Lower leg skin (tissue), 4 donors: ENCODE measurements at regions of chr4 and their contacts with region 1.

Region 1: DNA sequence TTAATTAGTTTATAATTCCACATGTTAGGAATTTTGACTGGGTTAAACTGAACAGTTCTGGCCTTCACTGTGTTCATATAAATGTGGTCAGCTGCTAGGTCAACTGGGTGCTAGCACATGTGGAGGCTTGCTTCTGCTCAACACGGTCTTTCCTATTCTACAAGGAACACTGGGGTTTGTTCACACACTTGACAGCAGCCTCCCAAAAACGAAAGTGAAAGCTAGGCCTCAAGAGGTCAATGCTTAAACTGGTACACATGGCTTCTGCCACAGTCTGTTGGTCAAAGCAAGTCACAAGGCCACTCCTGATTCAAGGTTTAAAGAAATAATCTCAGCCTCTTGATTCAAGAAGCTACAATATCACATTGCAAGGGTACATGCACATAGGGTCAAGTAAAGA is 126.5 kb downstream of the QDPR start:
- DNase-seq: no peak
- H3K4me3 ChIP-seq: no peak overlapping the region
- CTCF ChIP-seq: no peak
- POLR2A ChIP-seq: no peak

Region 2: DNA sequence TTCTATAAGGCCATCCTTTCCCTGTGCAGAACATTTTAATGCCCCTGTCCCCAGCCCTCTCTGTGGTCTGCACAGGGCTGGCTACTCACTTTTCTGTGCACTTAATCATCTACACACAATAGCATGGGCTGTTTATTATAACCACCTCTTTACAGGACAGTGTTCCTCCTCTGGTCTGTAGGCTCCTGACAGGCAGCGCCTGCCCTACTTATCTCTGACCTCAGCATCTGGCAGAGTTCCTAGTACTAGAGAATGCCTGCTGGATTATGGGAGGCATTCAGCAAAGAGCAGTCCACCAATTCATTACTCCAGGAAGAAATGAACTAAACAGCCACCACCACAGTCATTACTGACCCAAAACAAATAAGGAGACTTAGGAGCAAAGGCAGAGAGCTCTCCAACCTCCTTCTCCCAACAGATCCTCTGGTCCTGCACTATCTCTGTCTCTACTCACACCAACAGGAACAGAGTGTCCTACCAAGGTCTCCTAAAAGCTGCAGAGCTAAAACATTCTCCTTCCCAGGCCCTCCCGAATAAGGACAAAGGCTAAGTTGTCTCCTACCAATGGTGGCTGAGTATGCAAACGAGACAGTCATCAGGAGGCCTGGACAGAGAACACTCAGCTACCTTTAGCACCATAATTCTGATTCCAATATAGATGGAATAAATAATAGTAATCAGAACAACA is 152.7 kb before region 1 on chr4:
- intact Hi-C with region 1: no loop called
- DNase-seq: no peak
- H3K4me3 ChIP-seq: no peak overlapping the region
- CTCF ChIP-seq: no peak
- POLR2A ChIP-seq: no peak

Region 3: DNA sequence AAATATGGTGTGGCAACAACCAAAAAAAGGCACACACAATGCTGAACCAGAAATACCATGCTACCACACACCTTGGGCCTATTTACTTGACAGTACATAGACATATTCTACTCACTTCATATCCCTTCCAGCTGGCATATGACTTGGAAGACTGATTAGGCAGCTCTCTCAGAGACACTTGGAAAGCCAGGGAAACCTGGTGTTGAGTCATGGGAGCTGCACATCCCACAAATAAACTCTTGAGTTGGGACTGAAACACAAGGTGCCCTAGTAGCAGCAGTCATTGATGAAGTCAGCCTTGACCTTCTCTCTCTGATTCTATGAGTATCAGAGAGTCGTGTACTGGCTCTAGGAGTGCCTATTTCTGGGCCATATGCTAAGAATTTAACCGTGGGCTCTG is 1412.7 kb after region 1 on chr4:
- intact Hi-C with region 1: loop called (anchors 10 kb)
- DNase-seq: no peak
- H3K4me3 ChIP-seq: no peak overlapping the region
- CTCF ChIP-seq: no peak
- POLR2A ChIP-seq: no peak